GM13977 (cell line): ENCODE measurements at regions of chr1 and their contacts with region 1.

Region 1: GRCh38 chr1:181021811-181022434 is 747 bp downstream of the STX6 start:
- DNase-seq: peak; percentile 81
- CTCF ChIP-seq: no peak

Region 2: GRCh38 chr1:180502360-180503273 is 519.3 kb before region 1 on chr1 and contains the start of gene ACBD6:
- in situ Hi-C with region 1: loop called (anchors 25 kb)
- DNase-seq: peak; percentile 93
- CTCF ChIP-seq: peak; percentile 21

Region 3: GRCh38 chr1:181062836-181063428 is 41.0 kb after region 1 on chr1:
- in situ Hi-C with region 1: no loop called
- DNase-seq: peak; percentile 60
- CTCF ChIP-seq: no peak

Region 4: GRCh38 chr1:181117638-181118449 is 95.9 kb after region 1 on chr1:
- in situ Hi-C with region 1: no loop called
- DNase-seq: no peak
- CTCF ChIP-seq: no peak